MCF 10A (cell line): ENCODE measurements at regions of chr1 and their contacts with region 1.

Region 1: DNA sequence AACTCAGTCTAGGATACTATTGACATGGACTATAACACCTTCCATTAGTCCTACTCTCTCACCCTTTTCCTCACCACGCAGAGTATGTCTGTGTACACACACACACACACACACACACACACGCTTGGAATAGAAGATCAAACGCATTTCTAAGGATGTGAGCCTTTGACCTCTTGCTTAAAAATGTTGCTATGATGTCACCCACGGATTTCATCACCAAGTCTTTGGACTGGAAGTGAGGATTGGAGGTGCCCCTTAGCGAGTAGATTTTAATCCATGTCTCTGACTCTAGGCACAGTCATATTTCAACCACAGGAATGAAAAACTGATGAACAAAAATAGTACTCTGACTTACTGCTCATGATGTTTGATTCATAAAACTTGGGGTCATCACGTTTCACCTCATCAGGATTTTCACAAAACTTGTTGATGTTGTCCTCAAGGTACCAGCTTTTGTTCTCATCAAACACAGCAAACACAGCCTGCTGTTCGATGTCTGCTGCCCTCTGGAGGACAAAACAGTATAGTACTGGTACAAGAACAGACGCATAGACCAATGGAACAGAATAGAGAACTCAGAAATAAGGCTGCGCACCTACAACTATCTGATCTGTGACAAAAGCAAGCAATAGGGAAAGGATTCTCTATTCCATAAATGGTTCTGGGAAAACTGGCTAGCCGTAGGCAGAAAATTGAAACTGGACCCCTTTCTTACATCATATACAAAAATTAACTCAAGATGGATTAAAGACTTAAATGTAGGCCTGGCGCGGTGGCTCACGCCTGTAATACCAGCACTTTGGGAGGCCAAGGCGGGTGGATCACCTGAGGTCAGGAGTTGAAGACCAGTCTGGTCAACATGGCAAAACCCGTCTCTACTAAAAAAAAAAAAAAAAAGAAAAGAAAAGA is 39.9 kb downstream of the F5 start:
- DNase-seq: peak; percentile 88
- H3K4me3 Mint-ChIP-seq: no peak overlapping the region
- H3K27ac Mint-ChIP-seq: no peak overlapping the region
- H3K4me1 Mint-ChIP-seq: no peaks in the 10 kb centered on the region
- H3K27me3 Mint-ChIP-seq: peaks cover 8% of the 10 kb centered on the region
- CTCF ChIP-seq: peak; percentile 86

Region 2: GRCh38 chr1:168439456-168440375 is 1106.6 kb before region 1 on chr1:
- CTCF ChIA-PET with region 1: interaction called, 4 read pairs
- POLR2A ChIA-PET with region 1: no interaction called
- intact Hi-C with region 1: loop called (anchors 2 kb)
- DNase-seq: peak; percentile 91
- H3K4me3 Mint-ChIP-seq: no peak overlapping the region
- H3K27ac Mint-ChIP-seq: no peak overlapping the region
- H3K4me1 Mint-ChIP-seq: peaks cover 22% of the 10 kb centered on the region
- H3K27me3 Mint-ChIP-seq: peaks cover 4% of the 10 kb centered on the region
- CTCF ChIP-seq: peak; percentile 91

Region 3: DNA sequence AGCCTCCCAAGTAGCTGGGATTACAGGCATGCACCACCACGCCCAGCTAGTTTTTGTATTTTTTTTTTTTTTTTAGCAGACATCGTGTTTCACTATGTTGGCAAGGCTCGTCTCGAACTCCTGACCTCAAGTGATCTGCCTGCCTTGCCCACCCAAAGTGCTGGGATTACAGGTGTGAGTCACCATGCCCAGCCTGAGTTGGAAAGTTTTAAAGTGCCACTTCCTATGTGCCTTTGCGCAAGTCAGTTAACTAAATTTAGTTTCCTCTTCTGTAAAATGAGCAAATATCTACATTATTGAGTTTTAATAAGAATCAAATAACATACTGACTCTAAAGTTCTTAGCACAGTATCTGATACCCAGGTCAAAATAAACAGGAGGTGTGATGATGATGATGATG is 73.0 kb before region 1 on chr1:
- CTCF ChIA-PET with region 1: interaction called, 27 read pairs
- POLR2A ChIA-PET with region 1: interaction called, 5 read pairs
- intact Hi-C with region 1: no loop called
- DNase-seq: peak; percentile 27
- H3K4me3 Mint-ChIP-seq: no peak overlapping the region
- H3K27ac Mint-ChIP-seq: no peak overlapping the region
- H3K4me1 Mint-ChIP-seq: peaks cover 11% of the 10 kb centered on the region
- H3K27me3 Mint-ChIP-seq: no peaks in the 10 kb centered on the region
- CTCF ChIP-seq: no peak

Region 4: GRCh38 chr1:169511316-169512028 is 34.9 kb before region 1 on chr1:
- CTCF ChIA-PET with region 1: interaction called, 22 read pairs
- POLR2A ChIA-PET with region 1: interaction called, 8 read pairs
- intact Hi-C with region 1: loop called (anchors 2 kb)
- DNase-seq: peak; percentile 86
- H3K4me3 Mint-ChIP-seq: peak overlapping the region; percentile 5
- H3K27ac Mint-ChIP-seq: peak overlapping the region; percentile 86
- H3K4me1 Mint-ChIP-seq: peaks cover 62% of the 10 kb centered on the region
- H3K27me3 Mint-ChIP-seq: no peaks in the 10 kb centered on the region
- CTCF ChIP-seq: no peak

Region 5: GRCh38 chr1:169601093-169601881 is 54.9 kb after region 1 on chr1:
- CTCF ChIA-PET with region 1: interaction called, 30 read pairs
- POLR2A ChIA-PET with region 1: no interaction called
- intact Hi-C with region 1: no loop called
- DNase-seq: peak; percentile 55
- H3K4me3 Mint-ChIP-seq: no peak overlapping the region
- H3K27ac Mint-ChIP-seq: no peak overlapping the region
- H3K4me1 Mint-ChIP-seq: no peaks in the 10 kb centered on the region
- H3K27me3 Mint-ChIP-seq: peaks cover 34% of the 10 kb centered on the region
- CTCF ChIP-seq: peak; percentile 42

Region 6: DNA sequence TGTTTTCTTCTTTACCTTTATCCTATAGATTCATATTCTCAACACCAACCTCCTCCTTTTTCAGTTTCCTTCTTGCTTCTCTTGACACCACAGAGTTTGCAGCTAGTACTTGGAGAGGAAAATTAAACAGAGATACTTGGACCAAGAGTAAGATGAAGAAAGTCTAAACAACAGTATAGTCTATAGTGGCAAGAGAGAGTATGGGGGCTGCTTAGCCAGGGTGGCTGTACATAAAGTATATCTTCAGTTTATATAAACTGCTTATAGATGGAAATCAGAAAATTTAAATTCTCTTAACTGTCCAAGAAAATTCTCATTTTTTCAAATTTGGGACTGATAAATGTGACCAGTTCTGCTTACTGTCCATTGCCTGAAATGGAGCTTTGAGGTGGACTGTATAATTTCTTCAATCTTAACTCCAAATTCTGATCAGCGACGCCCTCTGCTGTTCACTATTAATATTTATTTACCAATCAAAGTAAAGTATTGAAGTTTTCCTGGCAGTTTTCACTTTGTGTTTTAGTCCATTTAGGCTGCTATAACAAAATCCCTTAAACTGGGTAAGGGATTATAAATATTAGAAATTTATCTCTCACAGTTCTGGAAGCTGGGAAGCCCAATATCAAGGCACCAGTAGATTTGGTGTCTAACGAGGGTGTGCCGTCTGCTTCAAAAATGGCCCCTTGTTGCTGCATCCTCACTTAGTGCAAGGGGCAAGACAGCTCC is 263.2 kb after region 1 on chr1:
- CTCF ChIA-PET with region 1: interaction called, 118 read pairs
- POLR2A ChIA-PET with region 1: no interaction called
- intact Hi-C with region 1: loop called (anchors 1 kb)
- DNase-seq: peak; percentile 60
- H3K4me3 Mint-ChIP-seq: no peak overlapping the region
- H3K27ac Mint-ChIP-seq: no peak overlapping the region
- H3K4me1 Mint-ChIP-seq: no peaks in the 10 kb centered on the region
- H3K27me3 Mint-ChIP-seq: no peaks in the 10 kb centered on the region
- CTCF ChIP-seq: peak; percentile 59